Activated CD4-positive, alpha-beta memory T cell treated with anti-CD3 and anti-CD28 coated beads for 36 hours (primary cell): ENCODE measurements at regions of chr17 and their contacts with region 1.

Region 1: GRCh38 chr17:61221597-61222460 is 177.8 kb upstream of the TBX2 start:
- DNase-seq: peak; percentile 46
- H3K4me3 Mint-ChIP-seq: peak overlapping the region; percentile 40
- H3K27ac Mint-ChIP-seq: peak overlapping the region; percentile 84
- H3K4me1 Mint-ChIP-seq: peaks cover 50% of the 10 kb centered on the region
- H3K27me3 Mint-ChIP-seq: no peaks in the 10 kb centered on the region

Region 2: DNA sequence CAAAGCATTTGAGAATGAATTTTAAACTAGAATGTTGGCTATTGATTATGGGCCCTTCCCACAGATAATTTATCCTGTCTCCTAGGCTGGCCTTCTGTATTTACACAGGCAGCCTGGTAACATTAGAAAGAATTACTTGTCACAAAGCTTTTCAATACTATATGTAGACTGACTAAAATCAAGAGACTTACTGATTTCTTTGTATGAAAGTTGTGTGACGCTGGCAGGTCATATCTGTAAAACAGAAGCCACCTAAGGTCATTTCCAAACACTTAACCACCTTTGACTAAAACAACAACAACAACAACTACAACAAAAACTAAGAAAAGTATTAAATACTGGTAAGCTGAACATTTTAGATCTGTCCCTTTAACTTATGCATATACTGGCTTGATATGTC is 151.2 kb before region 1 on chr17:
- CTCF ChIA-PET with region 1: no interaction called
- POLR2A ChIA-PET with region 1: no interaction called
- intact Hi-C with region 1: loop called (anchors 1 kb)
- DNase-seq: no peak
- H3K4me3 Mint-ChIP-seq: no peak overlapping the region
- H3K27ac Mint-ChIP-seq: no peak overlapping the region
- H3K4me1 Mint-ChIP-seq: peaks cover 6% of the 10 kb centered on the region
- H3K27me3 Mint-ChIP-seq: no peaks in the 10 kb centered on the region

Region 3: GRCh38 chr17:61139219-61139618 is 82.6 kb before region 1 on chr17:
- CTCF ChIA-PET with region 1: interaction called, 3 read pairs
- POLR2A ChIA-PET with region 1: no interaction called
- intact Hi-C with region 1: loop called (anchors 5 kb)
- DNase-seq: peak; percentile 68
- H3K4me3 Mint-ChIP-seq: peak overlapping the region; percentile 27
- H3K27ac Mint-ChIP-seq: no peak overlapping the region
- H3K4me1 Mint-ChIP-seq: peaks cover 15% of the 10 kb centered on the region
- H3K27me3 Mint-ChIP-seq: no peaks in the 10 kb centered on the region

Region 4: GRCh38 chr17:61157246-61157886 is 64.5 kb before region 1 on chr17:
- CTCF ChIA-PET with region 1: no interaction called
- POLR2A ChIA-PET with region 1: no interaction called
- intact Hi-C with region 1: loop called (anchors 5 kb)
- DNase-seq: no peak
- H3K4me3 Mint-ChIP-seq: no peak overlapping the region
- H3K27ac Mint-ChIP-seq: no peak overlapping the region
- H3K4me1 Mint-ChIP-seq: peaks cover 23% of the 10 kb centered on the region
- H3K27me3 Mint-ChIP-seq: no peaks in the 10 kb centered on the region

Region 5: DNA sequence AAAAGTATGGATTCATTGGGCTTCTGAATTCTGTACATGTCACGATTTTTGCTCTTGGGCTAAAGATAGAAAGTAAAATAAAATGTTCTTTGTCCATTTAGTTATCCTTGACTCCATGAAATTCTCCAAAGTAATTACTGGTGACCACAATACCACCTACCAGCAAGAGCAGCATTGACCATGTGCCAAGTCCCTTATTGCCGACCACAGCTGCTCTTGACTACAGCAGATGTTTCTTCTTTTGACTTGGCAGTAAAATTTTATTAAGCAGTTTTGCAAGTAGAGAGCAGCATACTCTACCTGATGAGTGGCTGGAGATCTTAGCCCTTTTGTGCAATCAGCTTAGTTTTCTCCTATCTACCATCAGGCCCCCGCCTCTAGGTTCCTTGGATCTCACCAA is 25.6 kb after region 1 on chr17:
- CTCF ChIA-PET with region 1: no interaction called
- POLR2A ChIA-PET with region 1: no interaction called
- intact Hi-C with region 1: no loop called
- DNase-seq: no peak
- H3K4me3 Mint-ChIP-seq: no peak overlapping the region
- H3K27ac Mint-ChIP-seq: no peak overlapping the region
- H3K4me1 Mint-ChIP-seq: peaks cover 11% of the 10 kb centered on the region
- H3K27me3 Mint-ChIP-seq: no peaks in the 10 kb centered on the region

Region 6: GRCh38 chr17:61279476-61280143 is 57.8 kb after region 1 on chr17:
- CTCF ChIA-PET with region 1: no interaction called
- POLR2A ChIA-PET with region 1: no interaction called
- intact Hi-C with region 1: loop called (anchors 1 kb)
- DNase-seq: no peak
- H3K4me3 Mint-ChIP-seq: no peak overlapping the region
- H3K27ac Mint-ChIP-seq: no peak overlapping the region
- H3K4me1 Mint-ChIP-seq: peaks cover 19% of the 10 kb centered on the region
- H3K27me3 Mint-ChIP-seq: no peaks in the 10 kb centered on the region